Heart left ventricle (tissue), 16 donors: ENCODE measurements at regions of chr18 and their contacts with region 1.

Region 1: GRCh38 chr18:77433076-77433475 is 183.4 kb downstream of the GALR1 start:
- DNase-seq: no peak
- ATAC-seq: no peak
- H3K4me3 ChIP-seq: no peak overlapping the region
- H3K27ac ChIP-seq: no peak overlapping the region
- H3K4me1 ChIP-seq: no peaks in the 10 kb centered on the region
- H3K27me3 ChIP-seq: no peaks in the 10 kb centered on the region
- CTCF ChIP-seq: no peak
- POLR2A ChIP-seq: no peak

Region 2: DNA sequence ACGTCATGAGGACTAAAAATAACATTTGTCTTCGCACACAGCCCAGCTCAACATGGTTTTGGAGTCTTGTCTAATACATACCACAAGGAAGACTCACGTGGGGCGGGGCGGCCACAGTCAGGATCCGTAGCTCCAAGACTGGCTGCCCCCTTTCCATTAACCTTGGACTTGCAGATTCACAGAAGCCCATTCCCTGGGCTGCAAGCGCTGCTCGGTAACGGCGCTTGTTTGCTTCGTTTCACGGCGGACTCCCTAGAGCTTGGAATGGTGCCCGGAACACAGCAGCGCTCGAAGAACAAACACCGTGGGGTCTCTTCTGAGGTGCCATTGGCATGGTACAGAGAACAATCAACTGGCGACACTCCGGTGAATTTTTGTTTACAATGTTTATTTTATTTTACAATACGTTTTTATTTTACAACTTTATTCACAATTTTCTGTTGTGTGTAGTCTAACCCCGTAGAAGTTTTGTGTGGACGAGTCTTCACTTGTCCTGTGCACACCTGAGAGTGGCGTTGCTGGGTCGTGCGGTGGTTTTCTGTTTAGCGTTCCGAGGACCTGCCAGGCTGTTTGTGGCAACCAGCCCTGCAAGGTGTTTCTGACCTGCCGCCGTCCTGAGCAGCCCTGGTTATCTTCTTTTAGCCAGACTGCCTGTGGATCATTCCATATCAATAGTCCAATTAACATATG is 56.9 kb before region 1 on chr18:
- intact Hi-C with region 1: loop called in 1 of 10 experiments (anchors 10 kb)
- DNase-seq: no peak
- ATAC-seq: no peak
- H3K4me3 ChIP-seq: no peak overlapping the region
- H3K27ac ChIP-seq: no peak overlapping the region
- H3K4me1 ChIP-seq: no peaks in the 10 kb centered on the region
- H3K27me3 ChIP-seq: peaks cover 0 to 7% (median 0%) of the 10 kb centered on the region in 9 donors
- CTCF ChIP-seq: no peak
- POLR2A ChIP-seq: no peak

Region 3: DNA sequence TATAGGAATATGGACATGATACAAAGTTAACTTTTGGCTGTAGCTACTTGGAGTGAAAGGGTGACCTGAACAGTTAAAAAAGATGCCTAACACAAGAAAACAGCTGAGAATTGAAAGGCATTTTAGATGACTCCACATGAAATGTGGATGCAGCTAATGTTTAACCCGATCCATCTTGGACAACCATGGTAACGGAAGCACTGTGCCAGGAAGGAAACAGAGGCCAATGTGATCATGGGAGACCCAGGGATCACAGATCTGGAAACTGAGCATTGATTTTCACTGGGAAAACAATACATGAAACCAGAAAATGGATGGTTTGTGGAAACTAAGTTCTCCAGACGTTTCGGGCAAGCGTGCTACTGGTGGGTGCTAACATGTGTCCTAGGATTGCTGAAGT is 485.7 kb after region 1 on chr18:
- intact Hi-C with region 1: no loop called
- DNase-seq: no peak
- ATAC-seq: no peak
- H3K4me3 ChIP-seq: no peak overlapping the region
- H3K27ac ChIP-seq: no peak overlapping the region
- H3K4me1 ChIP-seq: no peaks in the 10 kb centered on the region
- H3K27me3 ChIP-seq: peaks cover 0 to 8% (median 0%) of the 10 kb centered on the region in 9 donors
- CTCF ChIP-seq: no peak
- POLR2A ChIP-seq: no peak